ENCODE measurements at regions of chr12 and their contacts with region 1.

Region 1: DNA sequence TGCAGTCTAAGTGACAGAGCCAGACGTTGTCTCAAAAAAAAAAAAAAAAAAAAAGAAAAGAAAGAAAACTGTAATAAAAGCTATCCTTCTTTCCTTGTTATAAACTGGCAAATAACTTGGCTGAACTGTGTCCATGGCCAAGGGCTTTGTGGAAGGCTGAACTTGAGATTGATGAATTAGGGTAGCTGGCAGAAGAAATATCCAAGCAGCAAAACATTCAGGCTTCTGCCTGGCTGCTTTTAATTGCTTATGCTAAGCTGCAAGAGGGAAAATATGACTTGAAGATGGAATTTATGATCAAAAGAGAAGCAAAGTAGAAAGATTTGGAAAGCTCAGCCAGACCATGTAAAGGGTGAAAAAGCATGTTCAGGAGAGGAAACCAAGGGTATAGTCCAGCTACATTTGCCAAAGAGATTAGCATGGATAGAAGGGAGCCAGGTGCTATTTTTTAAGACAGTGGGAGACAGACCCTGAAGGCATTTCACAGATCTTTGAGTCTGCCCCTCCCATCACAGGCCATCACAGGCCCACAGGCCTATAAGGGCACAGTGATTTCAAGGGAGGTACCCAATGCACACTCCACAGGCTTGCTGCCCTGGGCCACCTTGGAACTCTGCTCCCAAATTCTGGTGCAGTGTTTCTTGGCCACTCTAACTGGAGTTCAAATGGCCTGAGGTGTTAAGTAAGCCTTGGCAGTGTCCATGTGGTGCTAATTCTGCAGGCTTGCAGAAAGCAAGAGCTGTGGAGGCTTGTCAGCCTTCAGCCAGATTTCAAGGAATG is 226.0 kb downstream of the AEBP2 start:
- DNase-seq: no peak
- ATAC-seq: peak; percentile 67
- H3K4me3 ChIP-seq: no peak overlapping the region
- H3K27ac ChIP-seq: peak overlapping the region; percentile 16 to 64
- H3K4me1 ChIP-seq: peaks cover 0 to 2% of the 10 kb centered on the region in 2 donors
- H3K27me3 ChIP-seq: no peaks in the 10 kb centered on the region

Region 2: DNA sequence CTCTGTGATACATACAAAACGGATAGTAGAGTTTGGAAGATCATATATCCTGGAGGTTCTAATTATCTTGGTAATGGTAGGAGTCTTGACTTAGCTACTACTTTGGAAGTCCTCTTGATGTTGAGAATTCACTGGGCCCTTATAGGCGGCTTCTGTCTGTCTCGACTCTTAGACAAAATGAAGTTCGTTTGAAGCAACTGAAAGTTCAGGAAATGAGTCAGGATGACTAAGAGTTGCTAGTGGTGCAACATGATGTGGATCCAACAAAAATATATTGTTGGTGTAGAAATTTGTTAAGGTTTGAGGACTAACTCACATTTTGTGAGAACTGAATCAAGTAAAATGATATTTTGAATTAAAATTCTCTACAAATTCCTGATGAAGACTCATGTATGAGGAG is 46.7 kb after region 1 on chr12:
- intact Hi-C with region 1: loop called in 1 of 2 experiments (anchors 5 kb)
- DNase-seq: no peak
- ATAC-seq: peak; percentile 74
- H3K4me3 ChIP-seq: no peak overlapping the region
- H3K27ac ChIP-seq: peak overlapping the region; percentile 36 to 95
- H3K4me1 ChIP-seq: peaks cover 0 to 5% of the 10 kb centered on the region in 2 donors
- H3K27me3 ChIP-seq: no peaks in the 10 kb centered on the region

Region 3: GRCh38 chr12:19739183-19739776 is 74.0 kb after region 1 on chr12:
- intact Hi-C with region 1: no loop called
- DNase-seq: no peak
- ATAC-seq: peak; percentile 87
- H3K4me3 ChIP-seq: no peak overlapping the region
- H3K27ac ChIP-seq: no peak overlapping the region
- H3K4me1 ChIP-seq: no peaks in the 10 kb centered on the region
- H3K27me3 ChIP-seq: no peaks in the 10 kb centered on the region